ENCODE measurements at regions of chr3 and their contacts with region 1.

Region 1: DNA sequence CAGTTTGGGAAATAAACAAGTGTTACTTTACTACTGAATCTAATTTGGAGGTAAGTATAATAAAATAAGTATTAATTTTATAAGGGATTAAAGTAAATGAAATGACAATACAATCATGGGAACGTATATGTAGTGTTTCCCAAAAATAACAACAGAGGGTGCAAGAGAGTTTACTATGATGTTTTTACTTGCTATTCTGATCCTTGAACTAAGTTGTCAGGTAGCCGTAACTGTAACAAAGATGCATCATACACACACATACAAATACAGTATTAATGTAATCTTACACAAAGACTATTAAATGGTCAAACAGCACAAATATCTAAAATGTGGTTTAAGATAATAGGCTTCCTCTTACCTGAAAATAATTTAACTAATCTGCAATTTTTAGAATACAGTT is 311.4 kb downstream of the TBC1D5 start:
- DNase-seq: peak in 1 of 2 donors; percentile 54
- H3K4me3 ChIP-seq: no peak overlapping the region
- H3K27ac ChIP-seq: no peak overlapping the region
- H3K4me1 ChIP-seq: peaks cover 0 to 9% (median 0%) of the 10 kb centered on the region in 4 donors
- H3K27me3 ChIP-seq: no peaks in the 10 kb centered on the region
- CTCF ChIP-seq: peak in 4 of 7 experiments; percentile 16 to 39 (median 22)
- EP300 ChIP-seq: no peak
- POLR2A ChIP-seq: no peak

Region 2: GRCh38 chr3:17841190-17841828 is 410.3 kb after region 1 on chr3:
- intact Hi-C with region 1: loop called (anchors 5 kb)
- DNase-seq: peak; percentile 74 to 86
- H3K4me3 ChIP-seq: no peak overlapping the region
- H3K27ac ChIP-seq: no peak overlapping the region
- H3K4me1 ChIP-seq: peaks cover 0 to 4% (median 1%) of the 10 kb centered on the region in 4 donors
- H3K27me3 ChIP-seq: peaks cover 0 to 3% (median 0%) of the 10 kb centered on the region in 3 donors
- CTCF ChIP-seq: peak in 5 of 7 experiments; percentile 82 to 89 (median 85)
- EP300 ChIP-seq: no peak
- POLR2A ChIP-seq: no peak